Ascending aorta (tissue), 2 donors: ENCODE measurements at regions of chr17 and their contacts with region 1.

Region 1: DNA sequence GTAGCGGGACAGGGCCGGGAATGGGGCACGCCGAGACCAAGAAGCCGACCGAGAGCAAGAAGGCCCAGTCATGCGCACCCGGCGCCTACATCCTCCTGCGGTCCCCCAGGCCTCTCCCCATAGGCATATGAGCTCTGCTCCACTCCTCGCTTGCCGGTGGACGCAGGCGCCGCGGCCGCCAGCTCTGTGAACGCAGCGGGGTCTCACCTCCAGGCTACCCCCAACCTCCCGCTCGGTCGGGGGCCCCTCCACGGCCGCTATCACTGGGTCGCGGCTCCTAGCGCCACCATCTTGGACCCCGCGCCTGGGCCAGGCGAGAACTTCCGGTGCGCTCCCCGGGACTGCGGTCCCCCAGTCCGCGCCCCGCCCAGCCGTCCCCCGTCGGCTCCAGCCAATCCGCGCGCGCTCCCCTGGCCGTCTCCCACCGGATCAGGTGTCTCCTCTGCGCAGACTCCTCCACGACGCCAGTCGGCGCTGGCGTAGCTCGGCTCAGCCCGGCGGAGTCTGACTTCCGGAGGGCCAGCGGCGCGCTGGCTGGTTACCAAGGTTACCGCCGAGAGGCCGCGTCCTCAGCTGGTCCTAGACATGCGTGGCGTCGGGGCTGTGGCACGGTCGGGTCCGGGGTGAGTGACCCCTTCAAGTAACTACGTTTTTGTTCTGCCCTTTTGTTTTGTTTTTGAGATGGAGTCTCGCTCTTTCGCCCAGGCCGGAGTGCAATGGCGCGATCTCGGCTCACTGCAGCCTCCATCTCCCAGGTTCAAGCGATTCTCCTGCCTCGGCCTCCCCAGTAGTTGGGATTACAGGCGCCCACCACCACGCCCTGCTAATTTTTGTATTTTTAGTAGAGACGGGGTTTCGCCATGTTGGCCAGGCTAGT is at the start of gene ZNF594:
- DNase-seq: peak; percentile 82 to 98
- H3K4me3 ChIP-seq: peak within 1 kb of the TSS; percentile 90 to 99
- H3K27ac ChIP-seq: peak within 1 kb of the TSS; percentile 86 to 87
- H3K4me1 ChIP-seq: peaks cover 6 to 12% of the 10 kb centered on the region in 2 donors
- H3K27me3 ChIP-seq: no peaks in the 10 kb centered on the region
- CTCF ChIP-seq: peak; percentile 72 to 81 (median 77)
- total RNA-seq, gene ZNF594: 0.21 TPM

Region 2: DNA sequence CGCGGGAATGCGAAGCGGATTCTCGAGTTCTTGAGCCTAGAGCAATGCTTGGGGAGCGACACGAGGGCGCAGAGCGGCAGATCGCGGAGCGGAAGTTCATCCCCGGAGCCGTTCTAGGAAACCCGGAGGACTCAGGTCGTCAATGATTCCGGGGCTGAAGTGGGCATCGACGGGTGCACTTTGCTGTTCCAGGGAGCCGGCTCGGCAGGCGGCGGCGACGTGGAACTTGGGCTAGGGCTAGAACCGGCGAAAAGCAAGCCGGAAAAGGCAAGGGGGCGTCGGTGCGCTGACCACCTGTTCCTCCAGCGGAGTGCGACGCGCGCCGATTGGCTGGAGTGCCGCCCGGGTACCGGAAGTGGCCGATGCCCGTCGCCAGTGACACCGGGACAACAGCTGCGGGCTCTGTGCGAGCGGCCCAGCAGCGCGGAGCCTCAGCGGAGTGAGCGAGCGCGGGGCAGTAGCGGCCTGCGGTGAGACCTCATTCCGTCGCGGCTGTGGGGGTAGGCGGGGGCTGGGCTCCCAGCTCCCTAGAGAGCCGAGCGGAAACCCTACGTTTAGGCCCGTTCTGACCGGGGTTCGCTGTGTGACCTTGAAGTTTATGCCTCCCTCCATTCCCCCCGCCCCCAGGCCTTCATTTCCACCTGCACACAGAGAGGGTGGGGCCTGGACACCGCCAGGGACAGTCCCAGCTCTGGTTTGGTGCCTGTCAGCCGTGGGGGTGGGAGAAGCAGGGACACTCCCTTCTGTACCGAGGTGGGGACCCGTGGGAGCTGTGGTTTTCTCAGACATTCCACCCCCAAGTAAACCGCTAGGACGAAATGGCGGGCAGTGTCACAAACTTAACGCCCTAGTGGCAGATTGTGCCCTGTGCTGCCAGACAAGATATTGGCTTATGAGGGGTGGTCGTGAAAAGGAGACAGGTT is 113.4 kb before region 1 on chr17 and contains the start of gene ZFP3:
- intact Hi-C with region 1: loop called (anchors 2 kb)
- DNase-seq: peak; percentile 33 to 90
- H3K4me3 ChIP-seq: peak within 1 kb of the TSS; percentile 78 to 79
- H3K27ac ChIP-seq: peak within 1 kb of the TSS; percentile 70 to 78
- H3K4me1 ChIP-seq: peaks cover 6 to 10% of the 10 kb centered on the region in 2 donors
- H3K27me3 ChIP-seq: no peaks in the 10 kb centered on the region
- CTCF ChIP-seq: no peak
- total RNA-seq, gene ZFP3: 0.21 TPM

Region 3: GRCh38 chr17:5111402-5112204 is 80.2 kb before region 1 on chr17 and contains the start of gene ZNF232:
- intact Hi-C with region 1: loop called (anchors 5 kb)
- DNase-seq: peak; percentile 63 to 95
- H3K4me3 ChIP-seq: peak within 1 kb of the TSS; percentile 60 to 97
- H3K27ac ChIP-seq: peak within 1 kb of the TSS; percentile 53 to 55
- H3K4me1 ChIP-seq: peaks cover 0 to 15% of the 10 kb centered on the region in 2 donors
- H3K27me3 ChIP-seq: peaks cover 4% of the 10 kb centered on the region
- CTCF ChIP-seq: no peak
- total RNA-seq, gene ZNF232: 2.3 TPM

Region 4: DNA sequence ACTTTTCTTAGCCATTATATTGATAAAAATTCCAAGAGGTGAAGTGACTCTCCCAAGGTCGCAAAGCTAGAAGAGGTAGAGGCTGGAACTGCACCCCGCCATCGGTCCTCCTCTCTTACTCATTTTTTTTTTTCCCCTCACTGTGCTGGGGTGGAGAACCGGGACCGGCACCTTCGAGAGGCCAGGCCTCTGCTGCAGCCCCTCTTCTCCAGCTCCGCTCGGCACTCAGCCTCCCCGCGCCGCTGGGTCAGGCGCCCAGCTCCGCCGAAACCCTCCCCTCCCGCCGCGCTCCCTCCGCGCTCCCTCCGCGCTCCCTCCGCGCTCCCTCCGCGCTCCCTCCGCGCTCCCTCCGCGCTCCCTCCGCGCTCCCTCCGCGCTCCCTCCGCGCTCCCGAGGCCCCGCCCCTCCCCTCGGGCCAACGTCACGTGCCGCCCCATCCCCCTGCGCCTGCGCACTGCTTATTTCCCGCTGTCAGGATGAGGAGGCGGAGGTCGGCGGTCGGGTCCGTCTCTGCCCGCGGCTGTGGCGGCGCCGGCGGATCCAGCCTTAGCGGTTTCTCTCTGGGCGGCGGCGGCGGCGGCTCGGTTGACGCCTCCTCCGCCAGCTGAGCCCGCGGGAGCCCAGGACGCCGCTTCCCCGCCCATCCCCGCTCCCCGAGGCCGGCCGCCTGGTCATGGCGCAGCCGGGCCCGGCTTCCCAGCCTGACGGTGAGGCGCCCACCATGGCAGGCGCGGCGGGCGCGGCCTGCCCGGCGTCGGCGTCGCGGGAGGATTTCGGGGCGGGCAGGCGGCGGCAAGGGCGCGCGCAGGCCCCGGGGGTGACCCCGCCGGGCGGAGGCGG is 90.3 kb after region 1 on chr17 and contains the start of gene RABEP1:
- intact Hi-C with region 1: loop called (anchors 2 kb)
- DNase-seq: peak; percentile 35 to 91
- H3K4me3 ChIP-seq: peak within 1 kb of the TSS; percentile 94 to 99
- H3K27ac ChIP-seq: peak within 1 kb of the TSS; percentile 87 to 99
- H3K4me1 ChIP-seq: peaks cover 0 to 18% of the 10 kb centered on the region in 2 donors
- H3K27me3 ChIP-seq: no peaks in the 10 kb centered on the region
- CTCF ChIP-seq: peak in 2 of 3 experiments; percentile 7 to 10
- total RNA-seq, gene RABEP1: 9.3 TPM

Region 5: GRCh38 chr17:5299383-5299782 is 107.6 kb after region 1 on chr17:
- intact Hi-C with region 1: no loop called
- DNase-seq: no peak
- H3K4me3 ChIP-seq: no peak overlapping the region
- H3K27ac ChIP-seq: peak overlapping the region in 1 of 2 donors; percentile 85
- H3K4me1 ChIP-seq: peaks cover 2 to 4% of the 10 kb centered on the region in 2 donors
- H3K27me3 ChIP-seq: no peaks in the 10 kb centered on the region
- CTCF ChIP-seq: no peak